ENCODE measurements at regions of chr9 and their contacts with region 1.

Region 1: DNA sequence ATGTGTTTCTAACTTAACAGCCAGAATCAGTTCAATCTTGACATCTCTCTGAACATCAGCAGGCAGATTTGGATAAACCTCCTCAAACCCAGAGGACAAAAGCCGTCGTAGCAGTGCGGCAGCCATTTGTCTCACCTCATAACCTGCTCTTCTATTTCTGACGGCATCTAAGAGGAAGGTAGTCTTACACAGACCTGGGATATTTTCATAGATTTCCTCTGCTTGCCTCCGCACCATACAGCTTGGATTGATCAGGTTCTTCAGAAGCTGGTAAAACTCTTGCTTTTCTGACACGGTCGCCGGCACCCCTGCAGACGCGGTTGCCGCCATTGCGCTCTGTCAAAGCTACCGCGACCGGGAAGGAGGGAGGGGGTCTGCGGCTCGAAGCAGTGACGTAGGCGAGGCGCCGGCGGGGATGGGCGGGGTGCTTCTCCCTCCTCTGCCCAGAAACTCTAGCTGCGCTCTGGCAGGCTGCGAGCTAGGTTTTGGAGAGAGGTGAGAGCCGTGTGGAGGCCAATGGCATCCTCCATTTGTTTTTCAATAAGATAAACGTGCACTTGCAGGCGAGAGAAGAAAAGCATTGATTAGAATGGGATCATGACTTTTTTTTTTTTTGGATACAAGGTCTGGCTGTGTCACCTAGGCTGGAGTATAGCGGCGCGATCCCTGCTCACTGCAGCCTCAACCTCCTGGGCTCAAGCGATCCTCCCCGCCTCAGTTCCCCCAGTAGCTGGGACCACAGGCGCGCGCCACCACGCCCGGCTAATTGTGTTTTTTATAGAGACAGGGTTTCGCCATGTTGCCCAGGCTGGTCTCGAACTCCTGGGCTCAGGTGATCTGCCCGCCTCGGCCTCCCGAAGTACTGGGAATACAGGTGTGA is at the start of gene RANBP6:
- DNase-seq: peak; percentile 85
- H3K4me3 Mint-ChIP-seq: peak within 1 kb of the TSS; percentile 99
- H3K27ac Mint-ChIP-seq: peak within 1 kb of the TSS; percentile 93
- H3K4me1 Mint-ChIP-seq: peaks cover 31% of the 10 kb centered on the region
- H3K27me3 Mint-ChIP-seq: no peaks in the 10 kb centered on the region
- CTCF ChIP-seq: no peak
- total RNA-seq, gene RANBP6: 13.9 and 18.2 TPM in 2 replicates

Region 2: GRCh38 chr9:5773324-5773999 is 242.1 kb before region 1 on chr9:
- CTCF ChIA-PET with region 1: no interaction called
- POLR2A ChIA-PET with region 1: no interaction called
- intact Hi-C with region 1: no loop called
- DNase-seq: no peak
- H3K4me3 Mint-ChIP-seq: no peak overlapping the region
- H3K27ac Mint-ChIP-seq: no peak overlapping the region
- H3K4me1 Mint-ChIP-seq: no peaks in the 10 kb centered on the region
- H3K27me3 Mint-ChIP-seq: no peaks in the 10 kb centered on the region
- CTCF ChIP-seq: no peak

Region 3: GRCh38 chr9:6000955-6001354 is 14.6 kb before region 1 on chr9:
- CTCF ChIA-PET with region 1: no interaction called
- POLR2A ChIA-PET with region 1: interaction called, 48 read pairs
- intact Hi-C with region 1: no loop called
- DNase-seq: no peak
- H3K4me3 Mint-ChIP-seq: no peak overlapping the region
- H3K27ac Mint-ChIP-seq: no peak overlapping the region
- H3K4me1 Mint-ChIP-seq: peaks cover 22% of the 10 kb centered on the region
- H3K27me3 Mint-ChIP-seq: no peaks in the 10 kb centered on the region
- CTCF ChIP-seq: no peak

Region 4: DNA sequence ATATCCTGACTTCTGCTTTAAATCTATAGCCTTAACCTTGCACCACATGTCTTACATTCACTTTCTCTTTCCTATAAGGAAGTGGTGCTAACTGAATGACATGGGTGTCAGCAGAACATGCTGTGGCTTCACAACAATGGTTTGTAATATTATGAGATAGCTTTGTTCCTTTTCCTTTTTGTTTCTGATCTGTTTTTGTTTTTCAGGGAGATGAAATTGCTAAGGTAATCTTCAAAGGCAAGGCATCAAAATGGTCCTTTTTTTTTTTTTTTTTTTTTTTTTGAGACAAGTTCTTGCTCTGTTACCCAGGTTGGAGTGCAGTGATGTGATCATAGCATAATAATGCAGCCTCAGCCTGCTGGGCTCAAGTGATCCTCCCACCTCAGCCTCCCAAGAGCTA is 53.5 kb after region 1 on chr9:
- CTCF ChIA-PET with region 1: no interaction called
- POLR2A ChIA-PET with region 1: no interaction called
- intact Hi-C with region 1: no loop called
- DNase-seq: no peak
- H3K4me3 Mint-ChIP-seq: no peak overlapping the region
- H3K27ac Mint-ChIP-seq: no peak overlapping the region
- H3K4me1 Mint-ChIP-seq: no peaks in the 10 kb centered on the region
- H3K27me3 Mint-ChIP-seq: no peaks in the 10 kb centered on the region
- CTCF ChIP-seq: no peak

Measured in MCF 10A (cell line).